ENCODE measurements at regions of chr14 and their contacts with region 1.

Region 1: DNA sequence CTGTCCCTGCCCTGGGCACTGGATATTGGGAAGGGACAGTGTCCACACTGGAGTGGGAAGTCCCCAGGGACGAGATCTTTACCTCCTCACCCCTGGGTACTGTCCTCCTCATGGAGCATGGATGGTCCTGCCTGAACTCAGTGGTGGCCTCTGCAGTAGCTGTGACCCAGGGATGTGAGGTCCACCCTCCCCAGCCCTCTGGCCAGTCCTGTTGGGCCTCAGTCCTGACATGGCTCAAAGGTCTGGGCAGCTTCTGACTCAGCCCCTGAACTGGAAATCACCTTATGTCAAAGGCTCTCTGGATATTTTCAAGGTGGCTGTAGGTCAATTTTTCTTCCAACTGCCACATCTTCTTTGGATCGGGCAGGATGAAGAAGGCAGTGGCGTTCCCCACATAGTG is 24.4 kb downstream of the SERPINA1 start:
- DNase-seq: no peak
- ATAC-seq: no peak
- H3K4me3 ChIP-seq: no peak overlapping the region
- H3K27ac ChIP-seq: no peak overlapping the region
- H3K4me1 ChIP-seq: peaks cover 0 to 1% of the 10 kb centered on the region in 2 experiments; a peak in 1 of 4 replicates
- H3K27me3 ChIP-seq: no peaks in the 10 kb centered on the region
- CTCF ChIP-seq: no peak
- POLR2A ChIP-seq: no peak
- RAD21 ChIP-seq: no peak

Region 2: DNA sequence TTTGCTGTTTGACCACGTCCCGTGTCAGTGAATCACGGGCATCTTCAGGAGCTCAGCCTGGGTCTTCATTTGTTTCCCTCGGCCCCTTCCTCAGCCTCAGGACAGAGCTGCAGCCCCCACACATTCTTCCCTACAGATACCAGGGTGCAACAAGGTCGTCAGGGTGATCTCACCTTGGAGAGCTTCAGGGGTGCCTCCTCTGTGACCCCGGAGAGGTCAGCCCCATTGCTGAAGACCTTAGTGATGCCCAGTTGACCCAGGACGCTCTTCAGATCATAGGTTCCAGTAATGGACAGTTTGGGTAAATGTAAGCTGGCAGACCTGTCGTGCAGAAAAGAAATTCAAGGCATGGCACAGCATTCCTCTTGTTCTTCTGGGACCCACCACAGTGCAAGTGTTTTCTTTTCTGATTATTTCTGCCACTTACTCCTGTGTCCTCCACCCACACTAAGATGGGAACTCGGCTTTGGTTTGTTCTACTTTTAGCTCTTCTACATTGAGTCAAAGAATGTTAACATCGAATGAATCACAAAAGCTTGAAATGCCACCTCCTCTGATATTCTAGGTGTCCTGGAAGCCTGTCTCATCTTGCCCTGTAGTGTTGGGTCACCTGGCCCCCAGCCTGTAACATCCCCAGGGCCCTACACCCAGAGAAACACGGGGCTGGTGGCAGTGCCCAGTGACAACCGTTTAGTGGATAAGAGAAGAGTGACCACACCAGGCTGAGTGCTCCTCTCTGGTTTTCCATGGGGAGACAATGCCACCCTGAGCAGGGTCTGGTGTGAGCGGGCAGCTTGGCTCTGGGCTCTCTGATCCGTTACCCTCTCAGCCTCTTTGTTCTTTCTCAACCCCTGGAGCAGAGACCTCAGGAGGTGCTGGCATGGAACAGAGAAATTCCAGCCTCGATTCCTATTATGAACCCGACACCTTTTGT is 15.5 kb after region 1 on chr14:
- CTCF ChIA-PET with region 1: no interaction called
- POLR2A ChIA-PET with region 1: no interaction called
- RAD21 ChIA-PET with region 1: no interaction called
- intact Hi-C with region 1: loop called (anchors 2 kb)
- DNase-seq: no peak
- ATAC-seq: no peak
- H3K4me3 ChIP-seq: no peak overlapping the region
- H3K27ac ChIP-seq: no peak overlapping the region
- H3K4me1 ChIP-seq: peaks cover 0 to 14% of the 10 kb centered on the region in 2 experiments; a peak in 2 of 4 replicates
- H3K27me3 ChIP-seq: no peaks in the 10 kb centered on the region
- CTCF ChIP-seq: no peak
- POLR2A ChIP-seq: no peak
- RAD21 ChIP-seq: no peak

Region 3: DNA sequence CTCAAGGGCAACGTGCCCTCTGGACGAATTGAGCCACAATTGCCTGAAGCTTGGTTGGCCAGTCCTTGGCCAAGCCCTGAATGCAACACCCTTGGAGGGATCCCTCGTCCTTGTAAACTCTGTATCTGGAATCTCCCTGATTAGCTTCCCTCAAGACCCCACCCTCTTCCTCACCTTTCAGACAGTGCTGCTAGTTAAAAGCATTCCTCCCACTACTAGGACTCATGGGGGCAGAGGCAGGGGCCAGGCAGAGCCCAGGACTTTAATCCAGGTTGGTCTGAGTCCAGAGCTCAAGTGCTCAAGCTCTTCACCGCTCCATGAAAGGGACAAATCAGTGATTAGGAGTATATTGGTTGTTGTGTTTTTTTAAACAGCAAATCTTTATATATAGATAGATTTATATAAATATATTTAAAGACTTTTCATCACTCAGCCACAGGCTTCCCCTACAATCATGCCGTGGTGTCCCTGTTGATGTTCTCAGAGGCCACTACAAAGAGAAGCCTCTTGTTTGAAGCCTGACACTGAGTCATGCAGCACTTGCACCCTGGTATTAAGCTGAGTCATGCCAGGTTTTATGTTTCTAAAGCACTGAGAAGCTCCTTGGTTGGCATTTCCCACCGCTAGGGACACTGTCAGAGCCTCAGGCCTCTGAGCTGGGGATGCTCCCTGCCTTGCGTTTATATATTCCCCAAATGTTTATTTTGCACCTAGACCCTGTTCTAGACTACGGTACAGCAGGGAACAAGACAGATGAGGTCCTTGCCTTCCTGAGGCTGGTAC is 459.7 kb after region 1 on chr14:
- CTCF ChIA-PET with region 1: no interaction called
- POLR2A ChIA-PET with region 1: no interaction called
- RAD21 ChIA-PET with region 1: no interaction called
- intact Hi-C with region 1: no loop called
- DNase-seq: peak; percentile 76
- ATAC-seq: peak; percentile 96
- H3K4me3 ChIP-seq: no peak overlapping the region
- H3K27ac ChIP-seq: peak overlapping the region; percentile 14; the same call in 1 of the 2 replicates
- H3K4me1 ChIP-seq: peaks cover 9 to 20% of the 10 kb centered on the region in 2 experiments
- H3K27me3 ChIP-seq: no peaks in the 10 kb centered on the region
- CTCF ChIP-seq: peak; percentile 25 to 75 (median 67); a peak in 5 of 6 replicates
- POLR2A ChIP-seq: no peak
- RAD21 ChIP-seq: peak; percentile 26; the same call in 1 of the 2 replicates